PC-3 (cell line): ENCODE measurements at regions of chr14 and their contacts with region 1.

Region 1: GRCh38 chr14:65704850-65705249 is 292.3 kb downstream of the FUT8 start:
- DNase-seq: no peak
- ATAC-seq: no peak; the same call in 1 of the 2 replicates
- H3K4me3 ChIP-seq: no peak overlapping the region
- H3K27ac ChIP-seq: no peak overlapping the region
- H3K4me1 ChIP-seq: no peaks in the 10 kb centered on the region
- H3K27me3 ChIP-seq: no peaks in the 10 kb centered on the region
- CTCF ChIP-seq: no peak

Region 2: GRCh38 chr14:65852689-65853088 is 147.8 kb after region 1 on chr14:
- CTCF ChIA-PET with region 1: no interaction called
- POLR2A ChIA-PET with region 1: interaction called, 15 read pairs
- intact Hi-C with region 1: no loop called
- DNase-seq: no peak
- ATAC-seq: no peak
- H3K4me3 ChIP-seq: no peak overlapping the region
- H3K27ac ChIP-seq: no peak overlapping the region
- H3K4me1 ChIP-seq: no peaks in the 10 kb centered on the region
- H3K27me3 ChIP-seq: peaks cover 16% of the 10 kb centered on the region
- CTCF ChIP-seq: no peak

Region 3: GRCh38 chr14:66247662-66248193 is 542.9 kb after region 1 on chr14:
- CTCF ChIA-PET with region 1: no interaction called
- POLR2A ChIA-PET with region 1: no interaction called
- intact Hi-C with region 1: no loop called
- DNase-seq: no peak
- ATAC-seq: no peak
- H3K4me3 ChIP-seq: no peak overlapping the region
- H3K27ac ChIP-seq: no peak overlapping the region
- H3K4me1 ChIP-seq: no peaks in the 10 kb centered on the region
- H3K27me3 ChIP-seq: peaks cover 77% of the 10 kb centered on the region
- CTCF ChIP-seq: no peak